Prostate gland (tissue), 2 donors: ENCODE measurements at regions of chr21 and their contacts with region 1.

Region 1: DNA sequence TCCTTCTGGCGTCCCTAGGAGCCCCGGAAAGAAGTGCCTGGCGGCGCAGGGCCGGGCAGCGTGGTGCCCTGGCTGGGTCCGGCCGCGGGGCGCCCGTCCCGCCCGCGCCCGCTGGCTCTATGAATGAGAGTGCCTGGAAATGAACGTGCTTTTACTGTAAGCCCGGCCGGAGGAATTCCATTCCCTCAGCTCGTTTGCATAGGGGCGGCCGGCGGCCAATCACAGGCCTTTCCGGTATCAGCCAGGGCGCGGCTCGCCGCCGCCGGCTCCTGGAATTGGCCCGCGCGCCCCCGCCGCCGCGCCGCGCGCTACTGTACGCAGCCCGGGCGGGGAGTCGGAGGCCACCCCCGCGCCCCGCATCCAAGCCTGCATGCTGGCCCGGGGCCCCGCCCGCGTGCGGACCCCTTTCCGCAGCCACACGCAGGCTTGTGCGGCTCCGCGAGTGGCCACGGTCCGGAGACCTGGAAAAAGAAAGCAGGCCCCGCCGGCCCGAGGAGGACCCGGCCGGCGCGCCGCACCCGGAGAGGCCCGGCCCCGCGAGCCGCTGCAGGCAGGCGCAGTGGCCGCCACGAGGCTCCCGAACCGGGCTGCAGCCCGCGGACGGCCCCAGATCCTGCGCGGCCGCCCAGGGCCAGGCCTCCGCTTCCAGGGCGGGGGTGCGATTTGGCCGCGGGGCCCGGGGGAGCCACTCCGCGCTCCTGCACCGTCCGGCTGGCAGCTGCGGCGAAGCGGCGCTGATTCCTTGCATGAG is 160.4 kb downstream of the RUNX1 start:
- DNase-seq: peak; percentile 97
- H3K4me3 ChIP-seq: peak overlapping the region; percentile 58 to 83
- H3K27ac ChIP-seq: peak overlapping the region; percentile 82 to 88
- H3K4me1 ChIP-seq: no peaks in the 10 kb centered on the region
- H3K27me3 ChIP-seq: no peaks in the 10 kb centered on the region
- CTCF ChIP-seq: peak in 2 of 4 experiments; percentile 2 to 50
- POLR2A ChIP-seq: peak; percentile 98

Region 2: GRCh38 chr21:34722684-34723300 is 166.0 kb before region 1 on chr21:
- intact Hi-C with region 1: no loop called
- DNase-seq: no peak
- H3K4me3 ChIP-seq: no peak overlapping the region
- H3K27ac ChIP-seq: no peak overlapping the region
- H3K4me1 ChIP-seq: no peaks in the 10 kb centered on the region
- H3K27me3 ChIP-seq: no peaks in the 10 kb centered on the region
- CTCF ChIP-seq: peak in 1 of 4 experiments; percentile 31
- POLR2A ChIP-seq: no peak

Region 3: DNA sequence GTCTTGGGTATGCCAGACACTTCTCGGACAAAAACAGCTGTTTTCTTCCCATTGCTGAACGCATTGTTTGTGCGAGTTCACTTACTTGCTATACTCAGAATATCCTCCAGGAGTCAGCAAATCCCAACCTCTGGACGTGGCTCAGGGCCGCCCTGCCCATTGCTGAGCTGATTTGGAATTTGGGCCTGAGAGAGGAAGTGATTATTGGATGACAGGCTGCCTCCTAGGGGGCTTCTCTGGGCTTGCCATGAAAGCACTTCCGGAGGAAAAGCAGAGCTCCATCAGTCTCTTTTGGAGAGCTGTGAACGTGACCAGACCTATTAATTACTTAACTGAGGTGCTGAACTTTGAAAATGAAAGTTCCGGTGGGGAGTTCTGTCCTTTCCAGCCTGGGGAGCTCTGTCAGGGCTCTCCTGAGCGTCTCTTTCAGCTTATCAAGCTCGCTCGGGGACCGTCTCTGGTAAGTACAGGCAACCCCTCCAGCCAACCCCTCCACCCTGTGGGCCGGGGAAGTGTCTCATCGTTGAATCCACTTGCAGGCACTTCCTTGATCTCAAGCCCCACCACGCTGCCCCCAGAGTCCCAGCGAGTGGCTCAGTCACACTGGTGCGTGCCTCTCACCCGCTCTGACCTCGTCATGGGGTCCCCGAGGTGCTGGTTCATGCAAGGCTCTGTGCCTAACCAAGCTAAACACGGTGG is 143.0 kb before region 1 on chr21:
- intact Hi-C with region 1: loop called (anchors 5 kb)
- DNase-seq: peak; percentile 61
- H3K4me3 ChIP-seq: no peak overlapping the region
- H3K27ac ChIP-seq: no peak overlapping the region
- H3K4me1 ChIP-seq: peaks cover 4% of the 10 kb centered on the region
- H3K27me3 ChIP-seq: no peaks in the 10 kb centered on the region
- CTCF ChIP-seq: peak; percentile 42 to 91 (median 86)
- POLR2A ChIP-seq: no peak

Region 4: GRCh38 chr21:35051287-35051818 is 162.6 kb after region 1 on chr21:
- intact Hi-C with region 1: loop called (anchors 5 kb)
- DNase-seq: peak; percentile 20
- H3K4me3 ChIP-seq: no peak overlapping the region
- H3K27ac ChIP-seq: no peak overlapping the region
- H3K4me1 ChIP-seq: peaks cover 3% of the 10 kb centered on the region
- H3K27me3 ChIP-seq: no peaks in the 10 kb centered on the region
- CTCF ChIP-seq: peak in 2 of 4 experiments; percentile 26 to 27
- POLR2A ChIP-seq: no peak

Region 5: GRCh38 chr21:35256467-35256988 is 367.8 kb after region 1 on chr21:
- intact Hi-C with region 1: loop called (anchors 5 kb)
- DNase-seq: peak; percentile 87
- H3K4me3 ChIP-seq: peak overlapping the region in 1 of 2 donors; percentile 4
- H3K27ac ChIP-seq: peak overlapping the region; percentile 80 to 85
- H3K4me1 ChIP-seq: no peaks in the 10 kb centered on the region
- H3K27me3 ChIP-seq: no peaks in the 10 kb centered on the region
- CTCF ChIP-seq: peak in 2 of 4 experiments; percentile 18 to 29
- POLR2A ChIP-seq: no peak

Region 6: DNA sequence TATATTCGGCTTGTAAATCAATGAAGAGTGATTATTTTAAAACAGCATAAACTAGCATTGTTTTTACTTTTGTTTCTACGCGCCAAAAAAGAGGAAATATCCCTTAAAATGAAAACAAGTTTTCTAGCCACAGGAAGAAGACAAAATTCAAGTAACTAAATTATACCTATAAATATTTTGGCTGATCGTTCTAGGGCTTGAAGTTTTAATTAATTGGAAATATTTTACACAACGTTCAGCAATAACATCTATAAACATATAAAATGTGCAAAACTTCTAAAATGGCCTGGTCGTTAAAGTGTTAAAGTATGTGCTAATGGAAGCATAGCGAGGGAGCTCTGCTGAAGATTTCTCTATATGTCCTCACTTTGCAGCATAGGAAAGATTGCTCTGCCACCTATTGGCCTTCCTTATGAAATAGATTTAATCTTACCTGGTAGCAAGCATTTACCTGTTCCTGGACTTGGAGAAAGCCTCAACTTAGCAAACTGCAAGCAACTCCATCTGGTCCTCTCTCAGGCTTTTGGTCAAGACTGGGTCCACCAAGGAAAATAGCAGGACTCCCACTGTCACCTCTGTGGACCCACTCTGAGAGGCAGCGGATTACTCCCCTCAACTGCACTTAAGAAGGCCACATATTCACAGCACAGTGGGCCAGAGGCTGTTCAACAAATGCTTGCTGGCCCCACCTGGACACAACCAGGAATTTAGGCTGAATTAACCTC is 511.7 kb after region 1 on chr21:
- intact Hi-C with region 1: loop called (anchors 2 kb)
- DNase-seq: peak; percentile 57
- H3K4me3 ChIP-seq: no peak overlapping the region
- H3K27ac ChIP-seq: no peak overlapping the region
- H3K4me1 ChIP-seq: no peaks in the 10 kb centered on the region
- H3K27me3 ChIP-seq: no peaks in the 10 kb centered on the region
- CTCF ChIP-seq: peak; percentile 34 to 78 (median 63)
- POLR2A ChIP-seq: no peak